Calu3 (cell line): ENCODE measurements at regions of chr21 and their contacts with region 1.

Region 1: GRCh38 chr21:14306151-14306907 is 76.6 kb downstream of the HSPA13 start:
- DNase-seq: no peak
- H3K4me3 Mint-ChIP-seq: no peak overlapping the region
- H3K27ac Mint-ChIP-seq: no peak overlapping the region
- H3K4me1 Mint-ChIP-seq: no peaks in the 10 kb centered on the region
- H3K27me3 Mint-ChIP-seq: no peaks in the 10 kb centered on the region
- CTCF ChIP-seq: no peak

Region 2: GRCh38 chr21:14070020-14070893 is 236.1 kb before region 1 on chr21:
- CTCF ChIA-PET with region 1: no interaction called
- intact Hi-C with region 1: no loop called
- DNase-seq: no peak
- H3K4me3 Mint-ChIP-seq: no peak overlapping the region
- H3K27ac Mint-ChIP-seq: no peak overlapping the region
- H3K4me1 Mint-ChIP-seq: no peaks in the 10 kb centered on the region
- H3K27me3 Mint-ChIP-seq: no peaks in the 10 kb centered on the region
- CTCF ChIP-seq: no peak

Region 3: GRCh38 chr21:14259747-14260146 is 46.6 kb before region 1 on chr21:
- CTCF ChIA-PET with region 1: no interaction called
- intact Hi-C with region 1: loop called (anchors 5 kb)
- DNase-seq: no peak
- H3K4me3 Mint-ChIP-seq: no peak overlapping the region
- H3K27ac Mint-ChIP-seq: no peak overlapping the region
- H3K4me1 Mint-ChIP-seq: no peaks in the 10 kb centered on the region
- H3K27me3 Mint-ChIP-seq: no peaks in the 10 kb centered on the region
- CTCF ChIP-seq: peak; percentile 47

Region 4: GRCh38 chr21:14288922-14289321 is 17.4 kb before region 1 on chr21:
- CTCF ChIA-PET with region 1: no interaction called
- intact Hi-C with region 1: no loop called
- DNase-seq: no peak
- H3K4me3 Mint-ChIP-seq: no peak overlapping the region
- H3K27ac Mint-ChIP-seq: no peak overlapping the region
- H3K4me1 Mint-ChIP-seq: no peaks in the 10 kb centered on the region
- H3K27me3 Mint-ChIP-seq: no peaks in the 10 kb centered on the region
- CTCF ChIP-seq: no peak

Region 5: DNA sequence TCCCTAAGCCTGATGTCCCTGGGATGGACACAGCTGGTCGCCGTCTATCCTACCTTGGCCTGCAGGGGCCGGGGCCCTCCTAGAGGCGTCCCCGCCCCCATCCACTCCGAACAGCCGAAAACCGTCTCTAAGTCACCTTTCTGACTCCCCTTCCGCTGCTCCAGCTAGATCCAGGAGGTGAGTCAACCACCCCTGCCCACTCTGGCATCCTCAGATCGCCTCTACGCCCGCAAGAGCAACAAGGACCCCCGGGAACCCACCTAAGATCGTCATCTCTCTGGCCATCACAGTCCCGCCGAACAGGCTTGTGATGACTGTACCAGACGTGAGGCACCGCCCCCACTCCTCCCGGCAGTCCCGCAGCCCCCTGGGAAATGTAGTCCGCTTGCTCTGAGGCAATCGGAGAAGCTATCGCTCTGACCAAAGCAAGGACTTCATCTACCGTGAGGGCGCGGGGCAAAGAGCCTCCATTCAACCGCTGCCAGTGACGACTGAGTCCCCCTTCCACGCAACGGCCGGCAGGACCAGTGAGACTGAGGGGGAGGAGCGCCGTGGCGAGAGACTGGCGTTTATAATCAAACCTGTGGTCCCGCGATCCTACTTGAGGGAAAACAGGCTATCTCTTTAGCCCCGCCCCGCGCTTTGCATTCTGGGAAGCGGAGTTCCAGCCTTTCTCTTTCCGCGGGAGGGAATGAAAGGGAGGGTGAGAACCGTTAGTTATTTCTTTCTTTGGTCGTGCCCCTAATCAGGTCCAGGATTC is 76.7 kb after region 1 on chr21 and contains the start of gene HSPA13:
- CTCF ChIA-PET with region 1: interaction called, 5 read pairs
- intact Hi-C with region 1: loop called (anchors 5 kb)
- DNase-seq: peak; percentile 95
- H3K4me3 Mint-ChIP-seq: peak within 1 kb of the TSS; percentile 97
- H3K27ac Mint-ChIP-seq: peak within 1 kb of the TSS; percentile 97
- H3K4me1 Mint-ChIP-seq: no peaks in the 10 kb centered on the region
- H3K27me3 Mint-ChIP-seq: no peaks in the 10 kb centered on the region
- CTCF ChIP-seq: no peak
- total RNA-seq, gene HSPA13: 31.9 and 36.6 TPM in 2 replicates

Region 6: DNA sequence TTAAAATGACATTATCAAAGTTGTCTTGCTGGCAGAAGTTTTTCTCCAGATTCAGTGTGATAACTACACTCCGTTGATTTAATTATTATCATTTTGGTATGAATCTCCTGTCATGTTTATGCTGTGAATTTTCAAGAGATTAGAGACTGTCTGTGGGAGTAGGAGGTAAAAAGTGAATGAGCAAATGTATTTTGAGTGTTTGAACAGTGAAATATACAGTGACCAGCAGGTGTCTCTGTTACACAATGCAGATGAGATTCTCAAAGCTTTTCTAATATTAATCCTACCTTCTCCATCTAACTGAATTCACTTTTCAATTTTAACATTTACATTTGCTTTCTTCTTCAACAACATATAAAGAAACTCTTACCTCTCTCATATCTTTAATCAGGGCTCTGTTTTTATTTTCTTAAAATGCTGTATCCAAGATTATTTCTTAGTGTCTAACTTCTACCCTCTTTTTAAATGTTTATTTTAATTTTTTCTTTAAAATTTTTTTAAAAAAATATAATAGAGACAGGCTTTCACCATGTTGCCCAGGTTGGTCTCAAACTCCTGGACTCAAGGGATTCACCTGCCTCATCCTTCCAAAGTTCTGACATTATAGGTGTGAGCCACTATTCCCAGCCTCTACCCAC is 97.5 kb after region 1 on chr21:
- CTCF ChIA-PET with region 1: no interaction called
- intact Hi-C with region 1: no loop called
- DNase-seq: peak; percentile 6
- H3K4me3 Mint-ChIP-seq: no peak overlapping the region
- H3K27ac Mint-ChIP-seq: no peak overlapping the region
- H3K4me1 Mint-ChIP-seq: no peaks in the 10 kb centered on the region
- H3K27me3 Mint-ChIP-seq: no peaks in the 10 kb centered on the region
- CTCF ChIP-seq: no peak